ENCODE measurements at regions of chr7 and their contacts with region 1.

Region 1: GRCh38 chr7:85725026-85725425 is 538.2 kb upstream of the SEMA3D start:
- DNase-seq: no peak
- H3K4me3 ChIP-seq: no peak overlapping the region
- H3K27ac ChIP-seq: no peak overlapping the region
- H3K4me1 ChIP-seq: peaks cover 2% of the 10 kb centered on the region
- H3K27me3 ChIP-seq: no peaks in the 10 kb centered on the region
- CTCF ChIP-seq: no peak

Region 2: GRCh38 chr7:85773116-85773728 is 48.2 kb after region 1 on chr7:
- CTCF ChIA-PET with region 1: no interaction called
- dilution Hi-C with region 1: no loop called
- in situ Hi-C with region 1: no loop called
- intact Hi-C with region 1: loop called (anchors 2 kb)
- DNase-seq: peak; percentile 36
- H3K4me3 ChIP-seq: no peak overlapping the region
- H3K27ac ChIP-seq: no peak overlapping the region
- H3K4me1 ChIP-seq: no peaks in the 10 kb centered on the region
- H3K27me3 ChIP-seq: no peaks in the 10 kb centered on the region
- CTCF ChIP-seq: no peak

Region 3: GRCh38 chr7:85890244-85890811 is 165.3 kb after region 1 on chr7:
- CTCF ChIA-PET with region 1: no interaction called
- dilution Hi-C with region 1: no loop called
- in situ Hi-C with region 1: no loop called
- intact Hi-C with region 1: no loop called
- DNase-seq: peak; percentile 4
- H3K4me3 ChIP-seq: no peak overlapping the region
- H3K27ac ChIP-seq: no peak overlapping the region
- H3K4me1 ChIP-seq: no peaks in the 10 kb centered on the region
- H3K27me3 ChIP-seq: no peaks in the 10 kb centered on the region
- CTCF ChIP-seq: peak; percentile 44 to 59